CD4-positive, alpha-beta T cell (primary cell): ENCODE measurements at regions of chr14 and their contacts with region 1.

Region 1: DNA sequence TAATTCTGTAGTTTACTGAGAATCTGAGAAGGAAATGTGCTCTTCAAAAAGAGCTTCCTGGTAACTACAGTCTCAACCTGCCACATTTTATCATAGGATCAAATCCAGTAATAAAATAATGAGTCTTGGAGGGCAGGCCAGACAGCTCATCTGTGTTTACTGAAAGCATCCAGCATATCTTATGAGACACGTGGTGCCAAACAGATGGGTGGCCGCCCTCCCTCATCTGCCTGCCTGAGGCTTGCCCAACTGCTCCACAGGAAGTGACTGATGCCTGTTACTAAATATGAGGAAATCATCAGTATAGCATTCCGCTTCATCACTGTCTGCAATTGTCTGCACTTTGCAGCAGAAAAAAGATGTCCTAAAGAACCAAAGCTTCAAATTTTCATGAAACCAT is 13.5 kb downstream of the DHRS7 start:
- DNase-seq: peak; percentile 44 to 87 (median 68)
- ATAC-seq: peak; percentile 99
- H3K4me3 ChIP-seq: no peak overlapping the region
- H3K4me3 Mint-ChIP-seq: no peak overlapping the region
- H3K27ac ChIP-seq: peak overlapping the region; percentile 32 to 73
- H3K27ac Mint-ChIP-seq: peak overlapping the region; percentile 87
- H3K4me1 ChIP-seq: peaks cover 29% of the 10 kb centered on the region
- H3K4me1 Mint-ChIP-seq: peaks cover 52% of the 10 kb centered on the region
- H3K27me3 ChIP-seq: no peaks in the 10 kb centered on the region
- H3K27me3 Mint-ChIP-seq: no peaks in the 10 kb centered on the region
- CTCF ChIP-seq: no peak

Region 2: DNA sequence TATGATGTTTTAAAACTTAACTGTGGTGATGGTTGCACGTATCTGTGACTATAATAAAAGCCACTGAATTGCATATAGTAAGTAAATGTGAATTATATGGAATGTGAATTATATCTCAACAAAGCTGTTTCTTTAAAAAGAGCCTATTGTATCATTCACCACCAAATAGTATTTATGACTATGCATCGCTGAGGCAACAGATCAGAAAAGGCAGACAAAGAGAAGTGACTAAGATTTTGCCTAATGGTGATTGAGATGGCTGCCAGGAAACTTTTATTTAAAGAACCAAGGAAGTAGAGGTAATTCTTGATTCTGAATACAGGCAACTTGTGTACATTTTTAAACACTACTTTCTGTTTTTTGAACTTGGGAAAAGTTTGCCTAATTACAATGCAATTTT is 18.2 kb before region 1 on chr14:
- CTCF ChIA-PET with region 1: no interaction called
- POLR2A ChIA-PET with region 1: interaction called, 3 read pairs
- intact Hi-C with region 1: loop called in 1 of 2 experiments (anchors 1 kb)
- DNase-seq: no peak
- ATAC-seq: no peak
- H3K4me3 ChIP-seq: no peak overlapping the region
- H3K4me3 Mint-ChIP-seq: no peak overlapping the region
- H3K27ac ChIP-seq: no peak overlapping the region
- H3K27ac Mint-ChIP-seq: no peak overlapping the region
- H3K4me1 ChIP-seq: no peaks in the 10 kb centered on the region
- H3K4me1 Mint-ChIP-seq: no peaks in the 10 kb centered on the region
- H3K27me3 ChIP-seq: no peaks in the 10 kb centered on the region
- H3K27me3 Mint-ChIP-seq: no peaks in the 10 kb centered on the region
- CTCF ChIP-seq: no peak

Region 3: DNA sequence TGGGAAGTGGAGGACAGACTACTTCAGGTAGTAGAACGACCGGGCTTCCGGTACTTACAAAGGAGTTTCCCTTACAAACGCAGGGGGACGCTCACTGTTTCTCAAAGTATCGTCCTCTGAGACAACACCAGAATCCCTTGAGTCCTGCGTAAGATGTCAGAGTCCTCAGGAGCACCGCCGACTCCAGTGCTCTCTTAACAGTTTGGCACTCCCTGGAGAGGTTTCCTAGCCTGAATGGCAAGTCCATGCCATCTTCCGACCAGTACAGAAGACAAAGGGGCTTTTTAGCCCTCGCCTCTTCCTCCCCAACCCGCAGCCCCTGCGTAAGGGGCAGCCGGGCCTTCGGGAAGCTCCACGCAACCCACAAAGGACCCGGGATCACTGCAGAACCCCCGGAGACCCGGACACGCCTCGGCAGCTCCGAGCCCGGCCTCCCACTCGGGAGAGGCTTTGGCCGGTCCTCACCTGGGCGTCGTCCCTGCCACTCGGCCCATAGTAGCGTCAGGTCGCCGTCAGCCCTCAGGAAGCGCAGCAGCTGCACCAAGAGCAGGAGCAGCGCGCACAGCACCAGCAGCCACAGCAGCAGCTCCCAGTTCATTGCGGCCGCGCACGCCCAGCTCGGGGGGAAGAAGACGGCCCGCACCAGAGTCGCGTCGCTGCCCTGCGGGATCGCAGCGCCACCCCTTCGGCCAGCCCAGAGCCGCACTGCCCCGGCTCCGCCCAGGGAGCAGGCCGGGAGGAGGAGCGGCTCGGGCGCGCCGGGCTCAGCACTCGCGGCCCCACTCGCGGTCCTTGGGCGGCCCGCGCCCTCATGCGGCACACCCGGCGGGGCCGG is 13.2 kb after region 1 on chr14 and contains the start of gene DHRS7:
- CTCF ChIA-PET with region 1: interaction called, 14 read pairs
- POLR2A ChIA-PET with region 1: interaction called, 27 read pairs
- intact Hi-C with region 1: no loop called
- DNase-seq: peak; percentile 33 to 87 (median 54)
- ATAC-seq: peak; percentile 73
- H3K4me3 ChIP-seq: peak within 1 kb of the TSS; percentile 70
- H3K4me3 Mint-ChIP-seq: peak within 1 kb of the TSS; percentile 96
- H3K27ac ChIP-seq: peak within 1 kb of the TSS; percentile 88 to 90
- H3K27ac Mint-ChIP-seq: peak within 1 kb of the TSS; percentile 97
- H3K4me1 ChIP-seq: peaks cover 32% of the 10 kb centered on the region
- H3K4me1 Mint-ChIP-seq: peaks cover 53% of the 10 kb centered on the region
- H3K27me3 ChIP-seq: no peaks in the 10 kb centered on the region
- H3K27me3 Mint-ChIP-seq: no peaks in the 10 kb centered on the region
- CTCF ChIP-seq: no peak
- total RNA-seq, gene DHRS7: 24.5 to 28.6 TPM